ENCODE measurements at regions of chr6 and their contacts with region 1.

Region 1: DNA sequence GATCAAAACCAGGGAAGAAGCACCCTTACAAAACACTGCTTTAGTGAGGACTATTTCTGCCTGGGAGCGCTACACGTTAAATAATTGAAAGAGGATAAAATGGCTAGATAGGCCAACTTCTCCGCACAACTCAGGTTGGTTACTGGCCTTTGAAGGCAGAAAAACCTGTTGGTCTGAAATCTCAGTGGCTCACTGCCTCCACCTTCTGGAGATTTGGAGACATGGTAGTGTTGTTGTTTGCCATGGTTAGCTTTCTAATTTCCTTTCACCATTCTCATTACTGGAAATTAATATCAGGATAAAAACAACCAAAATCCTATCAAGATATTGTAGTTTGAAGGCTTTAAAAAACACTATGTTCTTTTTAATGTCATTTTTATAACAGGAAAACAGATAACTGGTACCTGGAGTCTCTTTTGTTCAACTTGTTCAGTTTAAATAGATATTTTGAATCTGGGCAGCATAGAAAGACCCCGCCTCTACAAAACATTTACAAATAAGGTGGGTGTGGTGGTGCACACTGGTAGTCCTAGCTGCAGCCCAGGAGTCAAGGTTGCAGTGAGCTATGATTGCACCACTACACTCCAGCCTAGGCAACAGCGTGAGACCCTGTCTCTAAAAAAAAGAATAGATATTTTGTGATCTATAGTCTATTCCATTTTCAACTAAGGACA is 27.5 kb upstream of the BCLAF1 start:
- DNase-seq: peak; percentile 78 to 88 (median 83)
- H3K4me3 ChIP-seq: no peak overlapping the region
- H3K27ac ChIP-seq: no peak overlapping the region
- H3K4me1 ChIP-seq: peaks cover 0 to 2% (median 0%) of the 10 kb centered on the region in 4 experiments
- H3K27me3 ChIP-seq: no peaks in the 10 kb centered on the region

Region 2: DNA sequence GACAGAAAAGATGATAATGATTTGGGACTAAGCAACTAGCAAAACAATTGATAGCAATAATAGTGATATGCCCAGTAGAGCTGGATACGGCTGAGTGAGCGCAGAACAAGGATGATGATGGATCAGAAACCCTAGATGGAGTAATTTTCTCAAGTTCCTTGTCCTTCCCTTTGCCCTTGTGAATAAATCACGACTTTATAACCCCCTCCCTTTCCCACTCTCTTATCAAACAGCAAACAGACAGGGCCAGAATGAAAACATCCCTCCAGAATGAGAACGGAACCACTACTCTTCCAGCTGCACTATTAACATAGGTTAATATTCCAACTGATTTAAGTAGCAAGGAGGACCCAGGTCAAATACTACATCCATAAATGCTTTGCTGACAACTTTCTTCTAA is 65.8 kb before region 1 on chr6:
- CTCF ChIA-PET with region 1: interaction called, 11 read pairs
- POLR2A ChIA-PET with region 1: no interaction called
- DNase-seq: peak in 2 of 3 donors; percentile 26 to 33
- H3K4me3 ChIP-seq: peak overlapping the region in 3 of 7 experiments; percentile 66 to 99 (median 83)
- H3K27ac ChIP-seq: no peak overlapping the region
- H3K4me1 ChIP-seq: peaks cover 8 to 19% (median 13%) of the 10 kb centered on the region in 4 experiments
- H3K27me3 ChIP-seq: no peaks in the 10 kb centered on the region

Region 3: GRCh38 chr6:136289579-136290409 is 27.4 kb before region 1 on chr6 and contains the start of gene BCLAF1:
- CTCF ChIA-PET with region 1: interaction called, 17 read pairs
- POLR2A ChIA-PET with region 1: interaction called, 4 read pairs
- DNase-seq: peak; percentile 99 to 100 (median 100)
- H3K4me3 ChIP-seq: peak within 1 kb of the TSS; percentile 71 to 98 (median 93)
- H3K27ac ChIP-seq: peak within 1 kb of the TSS; percentile 100
- H3K4me1 ChIP-seq: peaks cover 20 to 58% (median 40%) of the 10 kb centered on the region in 4 experiments
- H3K27me3 ChIP-seq: no peaks in the 10 kb centered on the region

Region 4: GRCh38 chr6:136333824-136334464 is 16.8 kb after region 1 on chr6:
- CTCF ChIA-PET with region 1: interaction called, 10 read pairs
- POLR2A ChIA-PET with region 1: no interaction called
- DNase-seq: peak in 2 of 3 donors; percentile 43 to 61
- H3K4me3 ChIP-seq: no peak overlapping the region
- H3K27ac ChIP-seq: no peak overlapping the region
- H3K4me1 ChIP-seq: no peaks in the 10 kb centered on the region
- H3K27me3 ChIP-seq: no peaks in the 10 kb centered on the region

Region 5: DNA sequence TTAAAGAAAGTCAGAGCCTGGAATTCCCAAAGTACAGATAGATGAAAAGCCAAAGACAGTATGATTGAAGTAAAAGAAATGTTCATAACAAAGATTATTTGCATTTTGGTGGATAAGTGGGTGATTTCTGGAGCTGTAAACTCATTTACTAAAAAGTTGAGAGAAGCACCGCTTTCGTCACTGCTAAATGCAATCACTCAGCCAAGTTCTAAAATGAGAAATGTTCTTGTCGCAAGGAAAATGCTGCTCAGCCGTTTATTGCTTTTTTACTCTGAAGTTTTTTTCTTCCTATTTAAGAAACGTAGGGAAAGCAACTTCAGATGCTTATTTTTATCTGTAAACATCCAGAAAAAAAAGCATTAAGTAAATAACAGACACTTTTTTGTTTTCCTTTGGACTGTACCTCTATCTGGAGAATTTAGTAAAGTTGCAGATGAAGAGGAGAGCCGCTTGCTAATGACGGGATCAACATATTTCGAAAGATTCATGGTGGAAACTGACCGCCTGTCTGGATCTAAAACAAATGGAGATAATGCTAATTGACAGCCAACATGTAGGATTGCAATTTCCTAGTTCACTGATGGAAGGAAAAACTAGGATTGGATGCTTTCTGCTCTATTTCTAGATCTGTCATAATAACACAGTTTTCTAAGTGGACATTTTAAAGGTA is 66.2 kb after region 1 on chr6:
- CTCF ChIA-PET with region 1: no interaction called
- POLR2A ChIA-PET with region 1: no interaction called
- DNase-seq: no peak
- H3K4me3 ChIP-seq: no peak overlapping the region
- H3K27ac ChIP-seq: no peak overlapping the region
- H3K4me1 ChIP-seq: no peaks in the 10 kb centered on the region
- H3K27me3 ChIP-seq: no peaks in the 10 kb centered on the region

Measured in common myeloid progenitor, CD34-positive (primary cell).